ENCODE measurements at regions of chr5 and their contacts with region 1.

Region 1: GRCh38 chr5:14545308-14545707 is 36.3 kb upstream of the OTULINL start:
- DNase-seq: no peak
- H3K4me3 ChIP-seq: no peak overlapping the region
- H3K27ac ChIP-seq: no peak overlapping the region
- H3K27me3 ChIP-seq: peaks cover 16% of the 10 kb centered on the region
- CTCF ChIP-seq: no peak

Region 2: DNA sequence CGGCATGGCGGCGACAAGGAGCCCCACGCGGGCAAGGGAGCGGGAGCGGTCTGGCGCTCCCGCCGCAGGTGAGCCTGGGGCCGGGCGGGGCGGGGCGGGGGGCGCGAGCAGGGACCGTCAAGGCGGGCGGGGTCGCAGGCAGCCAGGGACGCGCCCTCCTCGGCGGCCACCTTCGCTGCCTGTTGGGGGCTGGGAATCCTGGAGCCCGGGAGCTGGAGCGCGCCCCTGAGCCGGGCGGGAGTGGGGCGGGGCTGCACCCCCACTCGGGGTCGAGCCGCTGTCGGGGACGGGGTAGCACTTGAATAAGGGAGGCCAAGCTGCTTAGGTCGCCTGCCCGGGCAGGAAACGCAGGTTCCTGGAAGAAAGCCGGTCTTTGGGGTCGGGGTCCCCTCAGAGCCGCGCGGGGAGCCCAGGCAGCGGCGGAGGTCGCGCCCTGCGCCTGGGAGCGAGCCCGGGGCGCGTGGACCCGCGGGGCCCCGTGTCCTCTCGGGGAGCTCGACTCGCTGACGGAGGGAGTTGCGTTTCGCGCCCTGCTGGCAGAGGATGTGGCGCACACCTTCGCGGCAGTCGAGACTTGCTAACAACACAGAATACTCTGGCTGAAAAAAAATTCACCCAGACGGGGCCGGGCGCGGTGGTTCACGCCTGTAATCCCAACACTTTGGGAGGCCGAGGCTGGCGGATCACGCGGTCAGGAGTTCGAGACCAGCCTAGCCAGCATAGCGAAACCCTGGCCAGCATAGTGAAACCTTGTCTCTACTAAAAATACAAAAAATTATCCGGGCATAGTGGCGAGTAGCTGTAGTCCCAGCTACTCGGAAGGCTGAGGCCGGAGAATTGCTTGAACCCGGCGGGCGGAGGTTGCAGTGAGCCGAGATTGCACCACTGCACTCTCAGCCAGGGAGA is 36.8 kb after region 1 on chr5:
- CTCF ChIA-PET with region 1: no interaction called
- POLR2A ChIA-PET with region 1: interaction called, 10 read pairs
- DNase-seq: no peak
- H3K4me3 ChIP-seq: peak overlapping the region; percentile 43
- H3K27ac ChIP-seq: no peak overlapping the region
- H3K27me3 ChIP-seq: peaks cover 59% of the 10 kb centered on the region
- CTCF ChIP-seq: peak; percentile 18; the same call in 1 of the 2 replicates

Measured in AG04450 (cell line).